ENCODE measurements at regions of chr10 and their contacts with region 1.

Region 1: GRCh38 chr10:79468024-79468560 is 22.7 kb upstream of the ZCCHC24 start:
- DNase-seq: no peak
- H3K4me3 ChIP-seq: no peak overlapping the region
- H3K27ac ChIP-seq: peak overlapping the region; percentile 20 to 63 (median 34)
- H3K4me1 ChIP-seq: peaks cover 13 to 38% (median 26%) of the 10 kb centered on the region in 4 donors
- H3K27me3 ChIP-seq: no peaks in the 10 kb centered on the region
- CTCF ChIP-seq: no peak
- EP300 ChIP-seq: no peak
- POLR2A ChIP-seq: no peak

Region 2: GRCh38 chr10:79374312-79375191 is 93.5 kb before region 1 on chr10:
- intact Hi-C with region 1: loop called (anchors 1 kb)
- DNase-seq: peak; percentile 92
- H3K4me3 ChIP-seq: no peak overlapping the region
- H3K27ac ChIP-seq: peak overlapping the region in 1 of 4 donors; percentile 2
- H3K4me1 ChIP-seq: peaks cover 17 to 27% (median 24%) of the 10 kb centered on the region in 4 donors
- H3K27me3 ChIP-seq: no peaks in the 10 kb centered on the region
- CTCF ChIP-seq: peak; percentile 97 to 99 (median 98)
- EP300 ChIP-seq: no peak
- POLR2A ChIP-seq: no peak

Measured in esophagus muscularis mucosa (tissue), 4 donors.